ENCODE measurements at regions of chr17 and their contacts with region 1.

Region 1: DNA sequence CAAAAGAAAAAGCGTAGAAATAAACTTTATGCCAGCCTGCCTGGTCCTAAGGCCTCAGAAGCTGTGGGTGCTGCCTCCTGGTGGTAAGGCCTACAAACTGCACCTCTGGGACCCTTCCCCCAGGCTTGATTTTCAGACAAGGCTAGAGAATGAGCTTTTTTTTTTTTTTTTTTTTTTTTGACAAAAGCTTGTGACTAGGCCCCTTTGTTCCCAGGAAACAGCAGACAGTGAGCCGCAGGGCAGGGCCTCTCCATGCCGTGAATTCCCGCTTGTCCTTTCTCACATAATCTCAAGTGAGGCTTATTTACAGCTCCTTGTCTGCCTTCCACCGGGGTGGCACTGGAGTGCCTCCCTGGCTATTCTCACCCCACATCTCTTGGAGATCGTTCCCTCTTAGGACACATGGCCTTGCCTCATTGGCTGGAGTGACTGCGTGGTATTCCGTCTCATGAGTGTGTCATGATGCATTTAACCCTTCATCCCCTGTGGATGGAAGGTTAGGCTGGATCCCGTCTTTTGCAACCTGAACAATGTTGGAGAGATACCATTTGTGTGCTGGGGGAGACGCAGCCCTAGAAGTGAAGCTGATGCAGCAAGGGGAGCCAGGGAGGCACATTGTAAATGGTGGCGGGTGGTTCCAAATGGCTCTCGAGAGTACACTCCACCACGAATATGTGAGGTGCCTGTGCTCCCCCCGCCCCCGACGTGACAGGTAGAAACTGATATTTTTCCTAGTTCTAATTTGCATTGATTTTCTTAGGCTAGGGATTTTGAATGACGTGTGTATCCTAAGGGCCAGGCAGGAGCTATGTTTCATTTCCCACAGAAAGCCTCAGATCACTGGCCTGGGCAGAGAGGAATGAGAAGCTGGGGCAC is 49.6 kb downstream of the USP22 start:
- DNase-seq: peak; percentile 86
- ATAC-seq: peak; percentile 41
- H3K4me3 Mint-ChIP-seq: no peak overlapping the region
- H3K27ac Mint-ChIP-seq: peak overlapping the region; percentile 87
- H3K4me1 Mint-ChIP-seq: peaks cover 11% of the 10 kb centered on the region
- H3K27me3 Mint-ChIP-seq: no peaks in the 10 kb centered on the region
- CTCF ChIP-seq: peak; percentile 84

Region 2: GRCh38 chr17:20797292-20797691 is 195.9 kb before region 1 on chr17:
- CTCF ChIA-PET with region 1: interaction called, 22 read pairs
- POLR2A ChIA-PET with region 1: no interaction called
- DNase-seq: no peak
- ATAC-seq: no peak
- H3K4me3 Mint-ChIP-seq: no peak overlapping the region
- H3K27ac Mint-ChIP-seq: no peak overlapping the region
- H3K4me1 Mint-ChIP-seq: no peaks in the 10 kb centered on the region
- H3K27me3 Mint-ChIP-seq: no peaks in the 10 kb centered on the region
- CTCF ChIP-seq: no peak

Region 3: DNA sequence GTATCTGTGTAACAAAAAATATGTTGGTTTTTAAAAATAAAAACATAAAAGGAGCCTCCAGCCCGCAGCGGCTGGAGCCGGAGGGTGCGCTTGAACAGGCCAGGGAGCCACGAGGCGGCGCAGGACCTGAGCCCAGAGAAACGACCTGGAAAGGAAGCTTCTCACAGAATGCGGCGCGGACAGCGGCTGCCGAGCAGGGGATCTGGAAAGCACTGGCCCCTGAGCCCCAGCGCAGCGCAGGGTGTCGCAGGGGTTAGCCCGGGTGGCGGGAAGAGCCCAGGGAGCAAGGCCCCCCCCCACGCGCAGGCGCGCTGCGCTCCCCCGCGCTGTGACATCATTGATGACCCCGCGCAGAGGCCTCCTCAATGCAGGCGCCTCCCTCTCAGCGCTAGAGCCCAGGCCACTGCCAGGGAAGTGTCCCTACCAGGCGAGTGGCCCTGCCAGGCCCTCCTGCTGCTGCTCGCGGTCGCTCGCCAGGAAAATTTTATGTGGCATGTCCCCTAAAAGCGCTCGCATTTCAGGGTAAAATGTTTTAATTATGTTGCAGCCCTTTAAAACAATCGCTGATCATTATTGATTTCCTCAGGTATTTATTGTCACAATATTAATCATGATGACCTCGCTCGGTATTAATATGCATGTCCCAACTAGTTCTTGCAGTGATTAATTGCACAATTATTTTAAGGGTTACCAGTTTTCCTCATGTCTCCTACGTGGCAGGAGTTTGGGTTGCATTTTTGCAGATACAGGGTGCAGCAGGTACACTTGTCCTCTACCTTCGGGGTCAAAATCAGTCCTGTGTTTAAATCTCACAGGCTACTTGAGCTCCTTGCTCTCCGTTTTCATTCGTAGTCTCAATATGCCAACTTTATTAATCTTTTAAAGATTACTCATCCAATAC is 84.6 kb before region 1 on chr17:
- CTCF ChIA-PET with region 1: interaction called, 15 read pairs
- POLR2A ChIA-PET with region 1: no interaction called
- DNase-seq: peak; percentile 92
- ATAC-seq: peak; percentile 96
- H3K4me3 Mint-ChIP-seq: peak overlapping the region; percentile 67
- H3K27ac Mint-ChIP-seq: peak overlapping the region; percentile 95
- H3K4me1 Mint-ChIP-seq: peaks cover 25% of the 10 kb centered on the region
- H3K27me3 Mint-ChIP-seq: no peaks in the 10 kb centered on the region
- CTCF ChIP-seq: no peak

Region 4: DNA sequence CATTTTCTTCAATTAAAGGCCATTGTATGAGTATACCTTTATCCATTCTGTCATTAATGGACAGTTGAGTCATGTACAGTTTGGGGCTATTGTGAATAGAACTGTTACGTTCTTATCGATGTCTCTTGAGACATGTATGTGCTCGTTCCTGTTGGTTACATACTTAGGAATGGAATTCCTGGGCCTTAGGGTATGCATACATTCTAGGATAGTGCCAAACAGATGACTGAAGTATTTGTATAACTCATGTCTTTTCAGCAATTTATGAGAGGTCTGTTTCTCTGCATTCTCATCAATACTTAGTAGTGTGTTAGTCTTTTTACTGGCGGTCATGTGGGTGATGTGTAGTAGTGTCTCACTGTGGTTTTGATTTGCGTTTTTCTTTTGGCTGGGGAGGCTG is 31.6 kb before region 1 on chr17:
- CTCF ChIA-PET with region 1: interaction called, 14 read pairs
- POLR2A ChIA-PET with region 1: no interaction called
- DNase-seq: no peak
- ATAC-seq: no peak; the same call in 1 of the 2 replicates
- H3K4me3 Mint-ChIP-seq: no peak overlapping the region
- H3K27ac Mint-ChIP-seq: 0 out of 2 replicates have a peak overlapping the region, but pooled peaks have one; percentile 28
- H3K4me1 Mint-ChIP-seq: peaks cover 40% of the 10 kb centered on the region
- H3K27me3 Mint-ChIP-seq: no peaks in the 10 kb centered on the region
- CTCF ChIP-seq: no peak

Region 5: GRCh38 chr17:21043286-21044232 is 50.3 kb after region 1 on chr17:
- CTCF ChIA-PET with region 1: interaction called, 16 read pairs
- POLR2A ChIA-PET with region 1: no interaction called
- DNase-seq: peak; percentile 98
- ATAC-seq: peak; percentile 88
- H3K4me3 Mint-ChIP-seq: peak overlapping the region; percentile 73
- H3K27ac Mint-ChIP-seq: peak overlapping the region; percentile 97
- H3K4me1 Mint-ChIP-seq: peaks cover 26% of the 10 kb centered on the region
- H3K27me3 Mint-ChIP-seq: peaks cover 3% of the 10 kb centered on the region
- CTCF ChIP-seq: peak; percentile 35; the same call in 1 of the 2 replicates